ENCODE measurements at regions of chr11 and their contacts with region 1.

Region 1: GRCh38 chr11:68257475-68258362 is 14.1 kb downstream of the C11orf24 start:
- DNase-seq: peak; percentile 97 to 99 (median 97)
- H3K4me3 ChIP-seq: no peak overlapping the region
- H3K27ac ChIP-seq: peak overlapping the region in 1 of 2 donors; percentile 73
- H3K4me1 ChIP-seq: peaks cover 9% of the 10 kb centered on the region
- H3K27me3 ChIP-seq: no peaks in the 10 kb centered on the region
- CTCF ChIP-seq: peak; percentile 88 to 95 (median 89)
- EP300 ChIP-seq: no peak
- POLR2A ChIP-seq: no peak

Region 2: DNA sequence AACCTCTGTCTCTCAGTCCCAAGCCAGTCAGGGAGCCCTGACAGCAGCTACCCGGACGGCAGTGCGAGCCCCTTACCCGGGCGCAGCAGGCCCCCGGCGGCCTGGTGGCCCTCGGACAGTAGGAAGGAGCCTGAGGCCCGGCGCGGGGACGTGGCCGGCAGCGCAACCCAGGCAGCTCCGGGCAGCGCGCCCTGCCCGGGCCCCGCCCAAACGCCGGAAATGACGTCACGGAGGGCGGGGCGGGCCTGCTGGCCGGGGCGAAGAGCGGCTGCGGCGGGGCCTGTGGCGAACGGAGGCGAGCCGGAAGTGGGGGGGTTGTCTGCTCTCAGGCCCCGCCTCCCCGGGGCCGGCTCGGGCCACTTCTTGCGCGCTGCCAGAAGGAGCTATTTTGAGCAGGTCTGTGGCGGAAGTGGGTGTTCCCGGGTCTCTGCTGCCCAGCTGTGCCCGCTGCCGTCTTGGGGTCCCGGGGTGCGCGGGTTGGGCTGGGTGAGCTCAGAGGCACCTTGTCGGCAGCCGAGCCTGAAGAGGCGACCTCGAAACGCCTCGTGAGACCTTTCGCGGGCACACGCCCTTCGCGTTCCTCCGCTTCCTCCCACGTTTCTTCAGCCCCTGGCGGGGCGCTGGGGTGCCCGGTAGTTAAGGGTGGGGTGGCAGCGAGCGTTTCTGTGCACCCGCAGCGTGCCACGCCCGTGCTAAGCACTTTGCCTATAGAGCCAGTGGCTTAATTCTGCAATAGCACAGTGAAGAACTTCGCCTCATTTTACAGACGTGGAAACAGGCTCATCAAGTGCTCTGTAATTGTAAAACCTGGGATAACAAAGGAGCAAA is 14.3 kb after region 1 on chr11 and contains the start of gene C11orf24:
- intact Hi-C with region 1: loop called in 1 of 4 experiments (anchors 2 kb)
- DNase-seq: peak; percentile 94 to 96 (median 95)
- H3K4me3 ChIP-seq: peak within 1 kb of the TSS; percentile 62
- H3K27ac ChIP-seq: peak within 1 kb of the TSS; percentile 30 to 62
- H3K4me1 ChIP-seq: peaks cover 3% of the 10 kb centered on the region
- H3K27me3 ChIP-seq: no peaks in the 10 kb centered on the region
- CTCF ChIP-seq: no peak
- EP300 ChIP-seq: no peak
- POLR2A ChIP-seq: peak; percentile 77
- total RNA-seq, gene C11orf24: 17.3 to 47.3 (median 34.1) TPM

Region 3: GRCh38 chr11:68297812-68298658 is 40.3 kb after region 1 on chr11:
- intact Hi-C with region 1: loop called (anchors 2 to 5 kb)
- DNase-seq: peak; percentile 67 to 89 (median 79)
- H3K4me3 ChIP-seq: no peak overlapping the region
- H3K27ac ChIP-seq: no peak overlapping the region
- H3K4me1 ChIP-seq: no peaks in the 10 kb centered on the region
- H3K27me3 ChIP-seq: no peaks in the 10 kb centered on the region
- CTCF ChIP-seq: peak; percentile 92 to 95 (median 93)
- EP300 ChIP-seq: no peak
- POLR2A ChIP-seq: no peak

Region 4: GRCh38 chr11:68383976-68384501 is 126.3 kb after region 1 on chr11:
- intact Hi-C with region 1: loop called in 2 of 4 experiments (anchors 5 kb)
- DNase-seq: peak; percentile 57 to 79 (median 74)
- H3K4me3 ChIP-seq: no peak overlapping the region
- H3K27ac ChIP-seq: no peak overlapping the region
- H3K4me1 ChIP-seq: peaks cover 18% of the 10 kb centered on the region
- H3K27me3 ChIP-seq: no peaks in the 10 kb centered on the region
- CTCF ChIP-seq: peak; percentile 72 to 85 (median 73)
- EP300 ChIP-seq: no peak
- POLR2A ChIP-seq: no peak